MCF 10A (cell line): ENCODE measurements at regions of chr16 and their contacts with region 1.

Region 1: DNA sequence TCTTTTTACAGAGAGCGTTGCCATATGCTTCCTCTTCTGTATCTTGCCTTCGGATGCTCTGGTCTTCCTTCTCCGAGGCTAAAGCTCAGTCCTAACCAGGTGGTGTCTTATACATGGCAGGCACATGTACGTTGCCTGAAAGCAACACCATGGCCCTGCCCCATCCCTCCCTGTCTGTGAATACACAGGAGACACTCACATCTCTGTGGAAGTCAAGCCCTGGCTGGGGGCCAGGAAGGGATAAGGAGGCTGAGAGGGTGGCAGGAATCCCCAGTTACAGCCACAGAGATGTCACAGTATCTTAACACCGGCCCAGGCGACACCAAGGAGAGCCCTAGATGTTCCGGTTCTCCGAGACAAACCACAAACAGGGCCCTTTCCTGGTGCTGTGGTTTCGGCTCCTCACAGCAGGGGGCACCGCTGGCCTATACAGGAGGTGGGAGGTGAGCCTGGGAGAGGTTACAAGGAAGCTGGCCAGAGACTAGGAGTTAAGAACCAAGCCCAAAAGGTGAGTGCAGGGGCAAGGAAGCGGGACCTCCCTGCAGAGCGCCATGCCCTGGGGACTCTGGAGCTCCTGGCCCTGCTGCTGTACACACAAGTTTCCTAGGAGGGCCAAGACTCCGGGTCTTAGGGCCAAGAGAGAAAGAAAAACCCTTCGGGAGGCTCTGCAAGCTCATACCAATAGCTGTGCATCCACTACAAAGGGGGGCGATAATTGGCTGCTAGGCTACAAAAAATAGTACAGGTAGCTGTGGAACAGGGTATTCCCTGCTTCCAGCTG is 41.7 kb downstream of the SRL start:
- DNase-seq: peak; percentile 80
- H3K4me3 Mint-ChIP-seq: no peak overlapping the region
- H3K27ac Mint-ChIP-seq: no peak overlapping the region
- H3K4me1 Mint-ChIP-seq: peaks cover 10% of the 10 kb centered on the region
- H3K27me3 Mint-ChIP-seq: no peaks in the 10 kb centered on the region
- CTCF ChIP-seq: peak; percentile 84

Region 2: DNA sequence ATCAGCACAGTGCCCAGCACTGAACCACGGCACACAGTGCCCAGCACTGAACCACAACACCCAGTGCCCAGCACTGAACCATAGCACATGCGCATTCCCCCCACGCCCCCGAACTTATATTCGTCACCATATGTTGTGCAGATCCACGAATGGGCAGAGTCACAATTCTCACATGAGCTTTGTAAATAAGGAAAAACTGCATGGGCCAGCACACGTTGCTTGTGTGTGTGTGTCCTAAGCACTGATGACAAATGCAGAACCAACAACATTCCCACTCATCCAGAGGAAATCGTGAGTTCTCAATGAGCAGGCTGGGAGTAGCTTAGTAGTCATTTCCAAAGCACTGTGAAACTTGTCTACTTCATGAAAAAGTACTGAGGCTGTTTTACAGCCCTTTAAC is 154.0 kb before region 1 on chr16:
- CTCF ChIA-PET with region 1: no interaction called
- POLR2A ChIA-PET with region 1: no interaction called
- intact Hi-C with region 1: no loop called
- DNase-seq: no peak
- H3K4me3 Mint-ChIP-seq: no peak overlapping the region
- H3K27ac Mint-ChIP-seq: no peak overlapping the region
- H3K4me1 Mint-ChIP-seq: peaks cover under 1% of the 10 kb centered on the region
- H3K27me3 Mint-ChIP-seq: no peaks in the 10 kb centered on the region
- CTCF ChIP-seq: no peak

Region 3: DNA sequence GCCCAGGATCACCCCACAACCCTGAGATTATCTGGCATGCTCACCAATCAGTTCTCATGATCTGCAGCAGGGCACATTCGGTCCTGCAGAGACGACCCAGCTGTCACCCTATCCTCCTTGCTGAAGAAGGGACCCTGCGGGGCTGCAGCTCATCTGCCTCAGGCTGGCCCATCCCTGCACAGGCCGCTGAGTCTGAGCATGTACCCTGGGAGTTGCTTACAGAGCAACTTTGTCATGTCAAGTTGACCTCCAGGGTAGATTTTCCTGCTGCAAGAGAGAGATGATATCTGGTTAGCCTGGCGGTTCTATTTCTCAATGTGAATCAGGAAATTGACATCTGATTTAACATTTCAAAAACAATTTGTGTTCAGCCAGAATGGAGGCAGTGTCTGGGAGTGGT is 47.9 kb before region 1 on chr16:
- CTCF ChIA-PET with region 1: no interaction called
- POLR2A ChIA-PET with region 1: no interaction called
- intact Hi-C with region 1: no loop called
- DNase-seq: no peak
- H3K4me3 Mint-ChIP-seq: no peak overlapping the region
- H3K27ac Mint-ChIP-seq: no peak overlapping the region
- H3K4me1 Mint-ChIP-seq: no peaks in the 10 kb centered on the region
- H3K27me3 Mint-ChIP-seq: no peaks in the 10 kb centered on the region
- CTCF ChIP-seq: no peak

Region 4: GRCh38 chr16:4176612-4177417 is 23.4 kb before region 1 on chr16:
- CTCF ChIA-PET with region 1: no interaction called
- POLR2A ChIA-PET with region 1: no interaction called
- intact Hi-C with region 1: no loop called
- DNase-seq: peak; percentile 77
- H3K4me3 Mint-ChIP-seq: no peak overlapping the region
- H3K27ac Mint-ChIP-seq: no peak overlapping the region
- H3K4me1 Mint-ChIP-seq: peaks cover 20% of the 10 kb centered on the region
- H3K27me3 Mint-ChIP-seq: no peaks in the 10 kb centered on the region
- CTCF ChIP-seq: no peak

Region 5: DNA sequence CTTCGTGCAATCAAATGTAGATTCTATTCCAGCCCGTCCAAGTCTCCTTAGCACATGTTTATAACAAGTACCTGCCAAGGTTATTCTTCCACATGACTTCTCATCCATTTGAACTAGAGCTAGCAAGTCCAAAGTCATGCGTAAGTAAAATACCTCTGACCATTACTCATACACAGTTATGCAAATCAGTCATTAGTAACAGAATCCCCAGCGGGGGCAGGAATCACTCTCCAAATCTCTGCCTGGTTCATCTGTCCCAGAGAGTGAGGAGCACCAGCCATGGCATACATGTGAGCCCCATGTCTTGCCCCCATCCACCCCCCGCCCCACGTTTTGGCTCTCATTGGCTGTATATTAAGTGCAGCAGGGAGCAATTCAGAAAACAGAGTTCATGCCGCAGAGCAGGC is 14.0 kb after region 1 on chr16:
- CTCF ChIA-PET with region 1: interaction called, 12 read pairs
- POLR2A ChIA-PET with region 1: interaction called, 11 read pairs
- intact Hi-C with region 1: no loop called
- DNase-seq: peak; percentile 87
- H3K4me3 Mint-ChIP-seq: no peak overlapping the region
- H3K27ac Mint-ChIP-seq: peak overlapping the region; percentile 94
- H3K4me1 Mint-ChIP-seq: peaks cover 15% of the 10 kb centered on the region
- H3K27me3 Mint-ChIP-seq: no peaks in the 10 kb centered on the region
- CTCF ChIP-seq: no peak

Region 6: GRCh38 chr16:4261557-4262172 is 61.5 kb after region 1 on chr16:
- CTCF ChIA-PET with region 1: interaction called, 16 read pairs
- POLR2A ChIA-PET with region 1: interaction called, 3 read pairs
- intact Hi-C with region 1: no loop called
- DNase-seq: peak; percentile 23
- H3K4me3 Mint-ChIP-seq: no peak overlapping the region
- H3K27ac Mint-ChIP-seq: no peak overlapping the region
- H3K4me1 Mint-ChIP-seq: peaks cover 5% of the 10 kb centered on the region
- H3K27me3 Mint-ChIP-seq: no peaks in the 10 kb centered on the region
- CTCF ChIP-seq: peak; percentile 75

Region 7: GRCh38 chr16:4936991-4937781 is 737.0 kb after region 1 on chr16 and contains the start of gene PPL:
- CTCF ChIA-PET with region 1: no interaction called
- POLR2A ChIA-PET with region 1: no interaction called
- intact Hi-C with region 1: no loop called
- DNase-seq: peak; percentile 86
- H3K4me3 Mint-ChIP-seq: peak within 1 kb of the TSS; percentile 86
- H3K27ac Mint-ChIP-seq: no peak within 1 kb of the TSS
- H3K4me1 Mint-ChIP-seq: peaks cover 28% of the 10 kb centered on the region
- H3K27me3 Mint-ChIP-seq: no peaks in the 10 kb centered on the region
- CTCF ChIP-seq: no peak
- total RNA-seq, gene PPL: 49.1 and 50.1 TPM in 2 replicates